ENCODE measurements at regions of chr21 and their contacts with region 1.

Region 1: GRCh38 chr21:34745557-34746255 is 76.9 kb downstream of the CLIC6 start:
- DNase-seq: peak; percentile 77
- ATAC-seq: peak; percentile 93
- H3K4me3 Mint-ChIP-seq: no peak overlapping the region
- H3K27ac Mint-ChIP-seq: peak overlapping the region; percentile 35
- H3K4me1 Mint-ChIP-seq: peaks cover 5% of the 10 kb centered on the region
- H3K27me3 Mint-ChIP-seq: peaks cover 1% of the 10 kb centered on the region

Region 2: GRCh38 chr21:34653522-34653921 is 92.2 kb before region 1 on chr21:
- CTCF ChIA-PET with region 1: no interaction called
- POLR2A ChIA-PET with region 1: no interaction called
- intact Hi-C with region 1: no loop called
- DNase-seq: no peak
- ATAC-seq: no peak
- H3K4me3 Mint-ChIP-seq: no peak overlapping the region
- H3K27ac Mint-ChIP-seq: no peak overlapping the region
- H3K4me1 Mint-ChIP-seq: peaks cover 2% of the 10 kb centered on the region
- H3K27me3 Mint-ChIP-seq: peaks cover 38% of the 10 kb centered on the region

Region 3: DNA sequence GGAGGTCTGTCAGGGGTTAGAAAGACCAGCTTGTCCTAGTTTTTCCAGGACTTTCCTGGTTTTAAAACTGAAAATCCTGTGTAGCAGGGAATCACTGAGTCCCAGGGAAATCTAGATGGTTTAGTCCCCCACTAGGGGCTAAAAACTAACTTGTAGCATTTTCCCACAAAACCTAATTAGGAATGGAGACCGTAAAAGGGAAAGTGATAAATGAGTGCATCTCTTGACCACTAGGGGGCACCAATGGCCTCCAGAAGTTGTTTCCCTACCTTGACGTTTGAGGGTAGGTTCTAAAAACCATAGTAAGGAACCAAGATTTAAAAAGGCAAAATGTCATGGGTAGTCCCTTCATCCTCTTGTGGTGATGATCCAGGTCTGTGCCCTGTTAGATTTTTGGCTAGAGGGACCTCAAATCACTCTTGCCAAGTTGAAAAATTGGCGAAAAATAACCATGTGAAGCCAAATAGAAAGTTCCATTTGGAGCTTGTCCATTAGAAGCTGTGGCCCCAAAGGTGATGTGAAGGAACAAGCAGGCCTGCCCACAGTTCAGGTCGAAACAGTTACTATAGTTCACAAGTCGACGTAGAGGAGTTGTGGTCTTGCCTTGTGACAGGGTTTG is 52.4 kb before region 1 on chr21:
- CTCF ChIA-PET with region 1: interaction called, 13 read pairs
- POLR2A ChIA-PET with region 1: no interaction called
- intact Hi-C with region 1: loop called in 1 of 2 experiments (anchors 2 kb)
- DNase-seq: peak; percentile 71
- ATAC-seq: peak; percentile 60
- H3K4me3 Mint-ChIP-seq: no peak overlapping the region
- H3K27ac Mint-ChIP-seq: no peak overlapping the region
- H3K4me1 Mint-ChIP-seq: peaks cover 2% of the 10 kb centered on the region
- H3K27me3 Mint-ChIP-seq: peaks cover 13% of the 10 kb centered on the region

Region 4: DNA sequence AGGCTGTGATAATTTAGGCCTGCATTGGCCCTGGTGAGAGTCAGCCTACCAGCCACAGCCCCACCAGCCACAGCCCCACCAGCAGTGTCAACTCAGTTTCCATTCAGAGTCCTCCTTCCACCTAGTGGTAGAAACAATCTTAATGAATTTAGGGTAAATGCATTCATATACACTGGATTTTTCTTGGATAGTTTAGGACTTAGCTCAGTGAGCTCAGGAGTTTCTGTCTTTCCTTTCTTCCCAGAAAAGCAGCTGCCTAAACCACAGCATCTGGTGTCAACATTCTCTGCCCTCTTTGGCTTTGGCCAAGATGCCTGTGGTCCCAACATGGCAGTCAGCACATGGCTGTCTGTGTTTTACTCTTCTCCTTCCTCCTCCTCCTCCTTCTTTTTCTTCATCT is 17.1 kb after region 1 on chr21:
- CTCF ChIA-PET with region 1: interaction called, 10 read pairs
- POLR2A ChIA-PET with region 1: no interaction called
- intact Hi-C with region 1: no loop called
- DNase-seq: no peak
- ATAC-seq: no peak
- H3K4me3 Mint-ChIP-seq: no peak overlapping the region
- H3K27ac Mint-ChIP-seq: no peak overlapping the region
- H3K4me1 Mint-ChIP-seq: no peaks in the 10 kb centered on the region
- H3K27me3 Mint-ChIP-seq: no peaks in the 10 kb centered on the region

Region 5: GRCh38 chr21:35508139-35508888 is 762.6 kb after region 1 on chr21:
- CTCF ChIA-PET with region 1: interaction called, 3 read pairs
- POLR2A ChIA-PET with region 1: no interaction called
- intact Hi-C with region 1: loop called in 1 of 2 experiments (anchors 5 kb)
- DNase-seq: peak; percentile 40
- ATAC-seq: no peak
- H3K4me3 Mint-ChIP-seq: no peak overlapping the region
- H3K27ac Mint-ChIP-seq: no peak overlapping the region
- H3K4me1 Mint-ChIP-seq: peaks cover 53% of the 10 kb centered on the region
- H3K27me3 Mint-ChIP-seq: no peaks in the 10 kb centered on the region

Region 6: GRCh38 chr21:35616090-35616489 is 870.4 kb after region 1 on chr21:
- CTCF ChIA-PET with region 1: interaction called, 5 read pairs
- POLR2A ChIA-PET with region 1: no interaction called
- intact Hi-C with region 1: loop called in 1 of 2 experiments (anchors 5 kb)
- DNase-seq: no peak
- ATAC-seq: no peak
- H3K4me3 Mint-ChIP-seq: no peak overlapping the region
- H3K27ac Mint-ChIP-seq: no peak overlapping the region
- H3K4me1 Mint-ChIP-seq: peaks cover 6% of the 10 kb centered on the region
- H3K27me3 Mint-ChIP-seq: peaks cover 3% of the 10 kb centered on the region

Region 7: GRCh38 chr21:35840197-35840799 is 1094.6 kb after region 1 on chr21:
- CTCF ChIA-PET with region 1: interaction called, 14 read pairs
- POLR2A ChIA-PET with region 1: no interaction called
- intact Hi-C with region 1: loop called (anchors 1 kb)
- DNase-seq: peak; percentile 73
- ATAC-seq: no peak
- H3K4me3 Mint-ChIP-seq: no peak overlapping the region
- H3K27ac Mint-ChIP-seq: no peak overlapping the region
- H3K4me1 Mint-ChIP-seq: peaks cover 2% of the 10 kb centered on the region
- H3K27me3 Mint-ChIP-seq: no peaks in the 10 kb centered on the region

Region 8: GRCh38 chr21:36028127-36029069 is 1282.7 kb after region 1 on chr21:
- CTCF ChIA-PET with region 1: interaction called, 4 read pairs
- POLR2A ChIA-PET with region 1: no interaction called
- intact Hi-C with region 1: loop called (anchors 5 to 10 kb)
- DNase-seq: peak; percentile 77
- ATAC-seq: peak; percentile 93
- H3K4me3 Mint-ChIP-seq: no peak overlapping the region
- H3K27ac Mint-ChIP-seq: no peak overlapping the region
- H3K4me1 Mint-ChIP-seq: peaks cover 5% of the 10 kb centered on the region
- H3K27me3 Mint-ChIP-seq: no peaks in the 10 kb centered on the region